Activated CD8-positive, alpha-beta T cell treated with anti-CD3 and anti-CD28 coated beads, Interleukin-2, amount 10 ng/mL, durations not matched to agents 7 days and 5 days (primary cell): ENCODE measurements at regions of chr12 and their contacts with region 1.

Region 1: GRCh38 chr12:92145731-92146496 is at the start of gene BTG1:
- DNase-seq: peak; percentile 99
- ATAC-seq: peak; percentile 73
- H3K4me3 Mint-ChIP-seq: peak within 1 kb of the TSS; percentile 100
- H3K27ac Mint-ChIP-seq: peak within 1 kb of the TSS; percentile 99
- H3K4me1 Mint-ChIP-seq: peaks cover 20% of the 10 kb centered on the region
- H3K27me3 Mint-ChIP-seq: no peaks in the 10 kb centered on the region
- total RNA-seq, gene BTG1: 113 to 118 TPM

Region 2: GRCh38 chr12:91811481-91812287 is 334.2 kb before region 1 on chr12:
- CTCF ChIA-PET with region 1: interaction called, 28 read pairs
- POLR2A ChIA-PET with region 1: interaction called, 15 read pairs
- DNase-seq: peak; percentile 72
- ATAC-seq: peak; percentile 44
- H3K4me3 Mint-ChIP-seq: no peak overlapping the region
- H3K27ac Mint-ChIP-seq: no peak overlapping the region
- H3K4me1 Mint-ChIP-seq: peaks cover 11% of the 10 kb centered on the region
- H3K27me3 Mint-ChIP-seq: no peaks in the 10 kb centered on the region

Region 3: DNA sequence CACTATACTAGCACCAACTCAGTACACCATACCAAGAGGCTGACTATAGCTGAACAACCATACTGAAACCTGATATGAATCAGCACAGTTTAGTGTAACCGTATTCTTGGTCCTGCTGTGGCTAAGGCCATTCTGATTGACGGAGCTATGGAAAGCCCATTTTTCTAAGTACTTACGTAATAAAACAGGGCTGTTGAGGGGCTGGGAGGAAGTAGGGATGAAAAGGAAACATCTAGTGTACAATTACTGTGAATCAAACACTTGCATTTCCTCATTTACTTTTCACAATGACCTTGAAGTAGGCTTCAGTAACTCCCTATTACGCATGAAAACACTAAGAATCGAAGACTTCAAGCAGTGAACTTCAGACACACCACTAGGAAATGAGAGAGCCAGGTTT is 198.5 kb before region 1 on chr12:
- CTCF ChIA-PET with region 1: no interaction called
- POLR2A ChIA-PET with region 1: no interaction called
- DNase-seq: no peak
- ATAC-seq: no peak
- H3K4me3 Mint-ChIP-seq: no peak overlapping the region
- H3K27ac Mint-ChIP-seq: no peak overlapping the region
- H3K4me1 Mint-ChIP-seq: peaks cover 8% of the 10 kb centered on the region
- H3K27me3 Mint-ChIP-seq: no peaks in the 10 kb centered on the region

Region 4: GRCh38 chr12:92049403-92049802 is 96.5 kb before region 1 on chr12:
- CTCF ChIA-PET with region 1: no interaction called
- POLR2A ChIA-PET with region 1: interaction called, 24 read pairs
- DNase-seq: no peak
- ATAC-seq: no peak
- H3K4me3 Mint-ChIP-seq: no peak overlapping the region
- H3K27ac Mint-ChIP-seq: no peak overlapping the region
- H3K4me1 Mint-ChIP-seq: peaks cover 31% of the 10 kb centered on the region
- H3K27me3 Mint-ChIP-seq: no peaks in the 10 kb centered on the region

Region 5: GRCh38 chr12:92185052-92185451 is 39.1 kb after region 1 on chr12:
- CTCF ChIA-PET with region 1: interaction called, 4 read pairs
- POLR2A ChIA-PET with region 1: interaction called, 64 read pairs
- DNase-seq: peak; percentile 58
- ATAC-seq: peak; percentile 94
- H3K4me3 Mint-ChIP-seq: peak overlapping the region; percentile 45
- H3K27ac Mint-ChIP-seq: peak overlapping the region; percentile 91
- H3K4me1 Mint-ChIP-seq: peaks cover 50% of the 10 kb centered on the region
- H3K27me3 Mint-ChIP-seq: no peaks in the 10 kb centered on the region

Region 6: DNA sequence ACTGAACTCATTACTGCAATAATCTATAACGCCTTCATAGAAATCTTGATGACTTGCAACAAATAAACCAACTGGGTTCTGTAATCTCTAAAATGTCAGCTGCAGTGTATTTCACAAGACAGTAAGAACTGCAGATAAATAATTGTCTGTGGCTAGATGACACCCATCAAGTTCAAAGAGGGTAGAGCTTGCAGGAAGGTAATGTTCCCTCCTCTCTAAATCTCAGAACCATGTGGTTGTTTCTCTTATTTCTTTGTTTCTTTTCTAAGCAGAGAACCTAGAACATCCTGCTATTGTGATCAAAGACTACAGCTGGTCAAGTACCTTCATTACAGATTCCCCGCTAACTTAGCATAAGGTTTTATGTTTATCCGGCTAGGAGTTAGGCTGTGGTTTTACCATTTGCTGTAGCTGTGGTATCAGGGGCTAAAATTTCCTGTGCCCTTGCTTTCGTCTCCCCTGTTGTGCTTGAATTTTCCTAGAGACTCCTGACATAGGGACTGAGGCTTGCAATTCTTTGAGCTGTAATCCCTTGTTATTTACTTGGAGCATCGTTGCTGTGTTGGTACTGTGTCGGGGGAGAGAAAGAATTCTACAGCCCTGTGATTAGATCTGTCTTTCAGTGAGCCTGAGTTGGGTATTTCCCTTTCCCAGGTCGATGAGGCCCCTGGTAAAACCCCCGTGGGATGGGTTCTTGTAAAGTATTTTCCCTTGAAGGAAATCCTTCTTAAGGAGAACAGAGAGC is 252.8 kb after region 1 on chr12:
- CTCF ChIA-PET with region 1: interaction called, 8 read pairs
- POLR2A ChIA-PET with region 1: interaction called, 218 read pairs
- DNase-seq: peak; percentile 38
- ATAC-seq: peak; percentile 83
- H3K4me3 Mint-ChIP-seq: peak overlapping the region; percentile 57
- H3K27ac Mint-ChIP-seq: peak overlapping the region; percentile 88
- H3K4me1 Mint-ChIP-seq: peaks cover 85% of the 10 kb centered on the region
- H3K27me3 Mint-ChIP-seq: no peaks in the 10 kb centered on the region

Region 7: GRCh38 chr12:92561543-92561899 is 415.6 kb after region 1 on chr12:
- CTCF ChIA-PET with region 1: interaction called, 3 read pairs
- POLR2A ChIA-PET with region 1: interaction called, 27 read pairs
- DNase-seq: no peak
- ATAC-seq: no peak
- H3K4me3 Mint-ChIP-seq: no peak overlapping the region
- H3K27ac Mint-ChIP-seq: no peak overlapping the region
- H3K4me1 Mint-ChIP-seq: peaks cover 20% of the 10 kb centered on the region
- H3K27me3 Mint-ChIP-seq: no peaks in the 10 kb centered on the region

Region 8: DNA sequence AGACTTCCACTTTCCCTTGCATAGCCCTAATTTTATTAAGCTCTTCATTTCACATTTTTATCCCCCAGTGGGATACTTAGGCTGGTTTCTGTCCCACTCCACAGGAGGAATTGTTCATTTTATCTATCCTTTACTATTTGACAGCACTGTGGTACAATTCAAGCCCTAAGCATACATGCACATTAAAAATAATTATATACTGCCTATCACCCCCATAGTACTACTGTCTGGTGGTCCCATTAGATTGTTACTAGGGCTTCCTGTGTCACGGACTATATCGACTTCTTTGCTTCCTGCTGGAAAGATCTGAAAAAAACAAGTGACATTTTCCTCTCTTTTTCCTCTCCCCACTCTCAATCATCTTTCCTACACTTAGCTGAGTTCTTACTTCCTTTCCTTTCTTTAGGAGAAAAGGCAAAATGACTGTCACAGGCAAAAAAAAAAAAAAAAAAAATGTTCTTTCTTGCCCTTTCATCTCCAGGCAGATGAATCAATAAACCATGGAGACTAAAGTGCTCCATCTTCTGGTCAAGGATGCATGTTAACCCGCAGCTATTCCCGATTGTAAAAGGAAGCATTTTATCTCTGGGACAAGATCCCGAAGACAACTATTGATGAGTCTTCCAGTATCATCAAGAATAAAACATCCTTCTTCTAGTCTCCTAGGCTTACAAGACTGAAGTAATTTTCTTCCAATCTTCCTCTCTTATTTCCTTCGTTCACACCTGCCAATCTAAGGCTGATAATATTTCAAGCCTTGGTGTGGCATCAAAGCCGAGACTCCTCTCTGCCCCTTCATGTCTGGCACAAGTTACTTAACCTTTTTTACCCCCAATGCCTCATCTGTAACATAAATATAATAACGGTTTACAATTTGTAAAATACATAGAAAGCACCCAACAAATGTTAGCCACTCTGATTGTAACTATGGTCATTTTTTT is 462.5 kb after region 1 on chr12:
- CTCF ChIA-PET with region 1: no interaction called
- POLR2A ChIA-PET with region 1: no interaction called
- DNase-seq: no peak
- ATAC-seq: no peak
- H3K4me3 Mint-ChIP-seq: no peak overlapping the region
- H3K27ac Mint-ChIP-seq: no peak overlapping the region
- H3K4me1 Mint-ChIP-seq: peaks cover 9% of the 10 kb centered on the region
- H3K27me3 Mint-ChIP-seq: no peaks in the 10 kb centered on the region